IMR-90 (cell line): ENCODE measurements at regions of chr17 and their contacts with region 1.

Region 1: GRCh38 chr17:8753976-8754440 is 4.3 kb downstream of the SPDYE4 start:
- DNase-seq: peak; percentile 6
- ATAC-seq: peak; percentile 53
- H3K4me3 ChIP-seq: no peak overlapping the region
- H3K27ac ChIP-seq: no peak overlapping the region
- H3K4me1 ChIP-seq: no peaks in the 10 kb centered on the region
- H3K27me3 ChIP-seq: peaks cover 24% of the 10 kb centered on the region
- CTCF ChIP-seq: peak; percentile 36
- POLR2A ChIP-seq: no peak
- RAD21 ChIP-seq: no peak; the same call in 1 of the 2 replicates

Region 2: DNA sequence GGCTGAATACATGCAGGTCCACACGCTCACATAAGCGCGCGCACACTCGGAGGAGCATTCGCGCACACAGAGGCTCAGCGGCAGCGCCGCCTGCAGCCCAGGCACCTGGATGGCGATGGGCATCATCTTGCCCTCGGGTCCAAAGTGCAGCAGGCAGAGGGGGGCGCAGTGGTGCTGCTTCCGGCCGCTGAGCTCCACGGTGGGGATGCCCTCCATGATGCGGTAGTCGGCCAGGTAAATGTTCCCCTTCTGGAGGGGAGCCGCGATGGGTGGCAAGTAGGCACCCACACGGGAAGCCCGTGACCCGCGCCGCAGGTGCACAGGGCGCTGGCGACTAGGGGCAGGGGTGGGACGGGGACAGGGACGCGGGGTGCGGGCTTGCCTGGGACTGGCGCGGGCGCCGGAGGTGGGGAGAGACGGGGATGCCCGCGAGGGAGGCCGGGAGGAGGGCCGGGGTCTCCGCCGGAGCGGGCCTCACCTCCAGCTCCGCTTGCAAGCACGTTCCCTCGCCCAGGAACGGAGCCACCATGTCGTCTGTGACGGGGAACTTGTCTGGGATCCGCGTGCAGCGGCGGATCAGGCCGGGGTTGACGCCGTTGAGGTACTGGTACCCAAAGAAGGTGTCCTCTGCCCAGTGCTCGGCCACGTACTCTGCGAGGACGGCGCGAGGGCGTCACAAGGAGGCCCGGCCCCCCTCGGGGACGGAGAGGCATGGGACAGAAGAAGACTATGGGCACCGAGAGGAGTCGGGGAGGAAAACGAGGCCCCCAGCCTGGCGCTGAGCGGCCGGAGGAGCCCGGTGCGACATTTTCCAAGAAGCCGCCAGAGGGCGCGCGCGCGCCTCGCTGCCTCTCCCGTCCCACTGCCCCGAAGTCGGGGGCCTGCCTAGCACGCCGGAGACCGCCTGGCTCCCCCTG is 674.5 kb before region 1 on chr17:
- CTCF ChIA-PET with region 1: no interaction called
- POLR2A ChIA-PET with region 1: no interaction called
- dilution Hi-C with region 1: no loop called
- in situ Hi-C with region 1: loop called (anchors 25 kb)
- intact Hi-C with region 1: no loop called
- DNase-seq: peak; percentile 33
- ATAC-seq: peak; percentile 98
- H3K4me3 ChIP-seq: peak overlapping the region; percentile 48
- H3K27ac ChIP-seq: no peak overlapping the region
- H3K4me1 ChIP-seq: 0 out of 2 replicates have a peak, but pooled peaks cover 1% of the 10 kb centered on the region
- H3K27me3 ChIP-seq: peaks cover 64% of the 10 kb centered on the region
- CTCF ChIP-seq: peak; percentile 77
- POLR2A ChIP-seq: no peak
- RAD21 ChIP-seq: peak; percentile 63

Region 3: GRCh38 chr17:8409966-8410864 is 343.8 kb before region 1 on chr17:
- CTCF ChIA-PET with region 1: interaction called, 4 read pairs
- POLR2A ChIA-PET with region 1: no interaction called
- dilution Hi-C with region 1: no loop called
- in situ Hi-C with region 1: loop called (anchors 10 kb)
- intact Hi-C with region 1: no loop called
- DNase-seq: peak; percentile 82
- ATAC-seq: peak; percentile 99
- H3K4me3 ChIP-seq: no peak overlapping the region
- H3K27ac ChIP-seq: no peak overlapping the region
- H3K4me1 ChIP-seq: no peaks in the 10 kb centered on the region
- H3K27me3 ChIP-seq: peaks cover 11% of the 10 kb centered on the region
- CTCF ChIP-seq: peak; percentile 86
- POLR2A ChIP-seq: no peak
- RAD21 ChIP-seq: peak; percentile 76

Region 4: DNA sequence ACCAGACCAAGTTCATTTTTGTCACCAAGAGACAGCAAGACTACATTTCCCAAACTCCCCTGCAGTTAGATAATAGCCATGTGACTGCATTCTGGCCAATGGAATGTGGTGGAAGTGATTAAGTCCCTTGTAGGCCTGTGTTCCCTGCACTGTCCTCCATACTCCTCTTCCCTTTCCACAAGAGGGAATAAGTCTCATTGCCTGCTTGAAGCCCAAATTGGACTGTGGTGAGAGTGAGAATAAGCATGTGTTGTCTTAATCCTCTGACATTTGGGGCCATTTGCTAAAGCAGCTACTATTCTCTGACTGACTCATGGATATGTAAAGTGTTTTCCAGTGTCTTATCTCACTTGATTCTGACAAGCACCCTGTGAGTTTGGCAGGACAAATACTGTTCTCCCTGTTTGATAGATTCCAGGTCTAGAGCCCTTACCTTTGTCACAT is 92.8 kb after region 1 on chr17:
- CTCF ChIA-PET with region 1: no interaction called
- POLR2A ChIA-PET with region 1: no interaction called
- dilution Hi-C with region 1: no loop called
- in situ Hi-C with region 1: no loop called
- intact Hi-C with region 1: no loop called
- DNase-seq: peak; percentile 32
- ATAC-seq: peak; percentile 61; the same call in 1 of the 2 replicates
- H3K4me3 ChIP-seq: no peak overlapping the region
- H3K27ac ChIP-seq: no peak overlapping the region
- H3K4me1 ChIP-seq: no peaks in the 10 kb centered on the region
- H3K27me3 ChIP-seq: no peaks in the 10 kb centered on the region
- CTCF ChIP-seq: no peak
- POLR2A ChIP-seq: no peak
- RAD21 ChIP-seq: no peak

Region 5: DNA sequence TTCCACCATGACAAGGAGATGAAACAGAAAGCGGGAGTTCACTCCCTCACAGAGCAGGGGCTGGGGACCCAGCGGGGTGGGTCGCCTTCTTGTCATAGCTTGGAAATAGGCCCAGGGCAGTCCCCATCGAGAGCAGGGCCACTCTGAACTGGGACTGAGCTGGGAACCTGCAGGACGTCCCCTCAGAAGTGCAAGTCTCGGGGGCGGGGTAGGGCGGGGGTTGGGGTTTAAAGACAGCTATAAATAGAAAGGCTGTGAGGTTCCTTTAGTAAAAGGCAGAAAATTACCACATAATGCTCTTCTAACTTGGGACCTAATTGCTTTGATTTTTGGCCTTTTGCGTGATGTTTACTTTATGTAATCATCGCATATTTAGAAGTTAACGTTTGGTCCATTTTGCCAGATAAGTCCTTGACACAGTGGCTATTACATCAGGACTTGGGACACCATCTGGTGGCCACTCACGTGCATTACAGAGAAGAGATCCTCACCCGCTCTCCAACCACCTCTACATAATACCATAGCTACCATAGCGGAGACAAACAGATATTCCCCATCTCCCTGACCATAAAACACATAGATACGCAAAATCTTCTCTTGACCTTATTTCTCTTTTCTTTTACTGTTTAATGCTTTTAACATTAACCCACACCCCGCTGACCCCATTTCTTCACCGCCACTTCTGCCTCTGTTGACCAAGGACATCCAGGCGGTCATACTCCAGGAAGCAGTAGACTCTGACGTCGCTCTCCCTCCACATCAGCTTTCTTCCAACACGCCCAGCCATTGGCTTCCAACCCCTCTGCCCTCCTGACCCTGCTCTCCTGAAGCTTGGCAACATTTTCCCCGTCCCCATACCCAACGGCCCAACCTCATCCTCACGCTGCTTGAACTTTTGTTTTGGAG is 140.9 kb after region 1 on chr17:
- CTCF ChIA-PET with region 1: no interaction called
- POLR2A ChIA-PET with region 1: no interaction called
- dilution Hi-C with region 1: no loop called
- in situ Hi-C with region 1: no loop called
- intact Hi-C with region 1: loop called (anchors 1 kb)
- DNase-seq: peak; percentile 59
- ATAC-seq: peak; percentile 98
- H3K4me3 ChIP-seq: no peak overlapping the region
- H3K27ac ChIP-seq: no peak overlapping the region
- H3K4me1 ChIP-seq: no peaks in the 10 kb centered on the region
- H3K27me3 ChIP-seq: no peaks in the 10 kb centered on the region; the same call in 1 of the 2 replicates
- CTCF ChIP-seq: peak; percentile 60
- POLR2A ChIP-seq: no peak
- RAD21 ChIP-seq: peak; percentile 56

Region 6: GRCh38 chr17:9512323-9513168 is 758.5 kb after region 1 on chr17:
- CTCF ChIA-PET with region 1: no interaction called
- POLR2A ChIA-PET with region 1: no interaction called
- dilution Hi-C with region 1: no loop called
- in situ Hi-C with region 1: no loop called
- intact Hi-C with region 1: no loop called
- DNase-seq: peak; percentile 76
- ATAC-seq: peak; percentile 65
- H3K4me3 ChIP-seq: no peak overlapping the region
- H3K27ac ChIP-seq: no peak overlapping the region
- H3K4me1 ChIP-seq: no peaks in the 10 kb centered on the region
- H3K27me3 ChIP-seq: no peaks in the 10 kb centered on the region
- CTCF ChIP-seq: no peak
- POLR2A ChIP-seq: no peak
- RAD21 ChIP-seq: no peak